ENCODE measurements at regions of chr2 and their contacts with region 1.

Region 1: GRCh38 chr2:88669371-88670214 is 21.9 kb upstream of the RPIA start:
- DNase-seq: peak in 2 of 6 donors; percentile 56 to 67
- ATAC-seq: peak; percentile 64 to 82 (median 76)
- H3K4me3 ChIP-seq: no peak overlapping the region
- H3K27ac ChIP-seq: peak overlapping the region in 3 of 4 donors; percentile 29 to 76 (median 39)
- H3K4me1 ChIP-seq: peaks cover 5 to 35% (median 24%) of the 10 kb centered on the region in 3 donors
- H3K27me3 ChIP-seq: no peaks in the 10 kb centered on the region
- CTCF ChIP-seq: peak; percentile 35 to 53 (median 38)

Region 2: GRCh38 chr2:88190808-88191721 is 478.5 kb before region 1 on chr2:
- intact Hi-C with region 1: loop called in 1 of 3 experiments (anchors 5 kb)
- DNase-seq: peak in 3 of 6 donors; percentile 13 to 47 (median 28)
- ATAC-seq: peak; percentile 72 to 87 (median 76)
- H3K4me3 ChIP-seq: no peak overlapping the region
- H3K27ac ChIP-seq: no peak overlapping the region
- H3K4me1 ChIP-seq: no peaks in the 10 kb centered on the region
- H3K27me3 ChIP-seq: no peaks in the 10 kb centered on the region
- CTCF ChIP-seq: peak; percentile 15 to 54 (median 46)

Region 3: DNA sequence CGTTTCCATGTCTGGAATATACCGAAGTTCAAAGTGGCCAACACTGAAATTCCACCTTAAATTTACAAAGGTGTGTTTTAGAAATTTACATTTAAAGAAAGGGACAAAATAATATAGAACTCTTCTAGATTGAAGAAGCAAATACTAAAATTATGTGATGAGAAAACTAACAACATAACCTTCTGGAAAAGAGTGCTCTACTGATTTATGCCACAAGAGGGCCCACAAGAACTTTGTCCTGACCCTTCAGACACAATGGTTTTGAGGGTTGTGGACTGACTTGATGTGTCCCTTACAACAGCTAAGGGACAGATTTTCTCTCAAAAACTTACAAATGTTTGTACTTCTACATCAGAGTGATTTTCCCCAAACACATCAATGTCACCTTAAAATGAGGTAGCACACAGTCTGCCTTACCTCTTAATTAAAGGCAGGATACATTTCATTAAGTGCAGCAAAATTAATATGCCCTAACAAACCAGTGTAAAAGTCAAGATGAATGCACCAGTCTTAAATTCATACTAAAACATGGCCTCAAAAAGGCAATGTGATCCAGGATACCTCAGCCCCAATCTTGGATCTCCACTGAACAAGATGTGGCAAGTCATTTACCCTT is 78.5 kb before region 1 on chr2:
- intact Hi-C with region 1: loop called in 1 of 3 experiments (anchors 5 kb)
- DNase-seq: peak in 2 of 6 donors; percentile 38 to 48
- ATAC-seq: peak; percentile 62 to 97 (median 94)
- H3K4me3 ChIP-seq: no peak overlapping the region
- H3K27ac ChIP-seq: peak overlapping the region in 1 of 4 donors; percentile 22
- H3K4me1 ChIP-seq: peaks cover 2 to 5% (median 4%) of the 10 kb centered on the region in 3 donors
- H3K27me3 ChIP-seq: no peaks in the 10 kb centered on the region
- CTCF ChIP-seq: peak; percentile 53 to 67 (median 62)

Region 4: DNA sequence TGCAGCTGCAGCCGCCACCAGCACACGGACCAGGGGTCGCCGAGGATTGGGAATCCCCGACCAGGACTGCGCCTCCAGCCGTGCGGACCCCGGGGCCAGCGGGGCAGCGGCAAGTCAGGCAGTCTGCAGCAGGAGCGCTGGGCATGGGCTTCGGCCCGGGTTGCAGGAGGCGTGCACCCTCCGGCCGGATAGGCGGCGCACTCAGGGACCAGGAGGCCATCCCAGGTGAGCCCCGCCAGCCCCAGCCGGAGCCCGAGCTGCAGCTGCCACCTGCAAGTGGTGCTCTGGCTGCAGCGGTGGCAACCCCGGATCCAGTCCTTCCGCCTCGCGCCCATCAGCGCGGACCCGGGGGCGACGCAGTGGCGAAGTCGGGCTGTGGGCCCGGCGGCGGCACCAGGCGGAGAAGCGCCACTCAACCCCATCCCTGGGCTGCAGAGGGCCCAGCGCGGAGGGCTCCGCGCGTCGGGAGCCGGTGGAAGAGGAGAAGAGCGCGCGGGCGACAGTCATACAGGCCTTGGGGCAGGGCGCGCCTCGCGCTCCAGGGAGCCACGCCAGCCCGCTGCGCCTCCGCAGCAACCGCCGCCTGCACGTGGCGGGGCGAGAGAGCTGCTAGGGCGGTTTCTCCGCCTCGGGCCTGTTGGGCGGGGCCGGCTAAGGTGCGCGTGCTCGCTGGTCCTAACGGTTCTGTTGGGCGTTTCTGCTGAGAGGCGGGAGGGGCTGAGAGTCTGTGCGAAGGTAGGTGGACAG is 95.7 kb after region 1 on chr2:
- intact Hi-C with region 1: no loop called
- DNase-seq: peak; percentile 40 to 80 (median 58)
- ATAC-seq: peak; percentile 77 to 85 (median 84)
- H3K4me3 ChIP-seq: peak overlapping the region in 2 of 4 donors; percentile 0 to 33
- H3K27ac ChIP-seq: no peak overlapping the region
- H3K4me1 ChIP-seq: peaks cover 0 to 11% (median 0%) of the 10 kb centered on the region in 3 donors
- H3K27me3 ChIP-seq: peaks cover 0 to 11% (median 2%) of the 10 kb centered on the region in 4 donors
- CTCF ChIP-seq: no peak

Measured in pancreas (tissue), 10 donors.